B cell (primary cell): ENCODE measurements at regions of chr6 and their contacts with region 1.

Region 1: DNA sequence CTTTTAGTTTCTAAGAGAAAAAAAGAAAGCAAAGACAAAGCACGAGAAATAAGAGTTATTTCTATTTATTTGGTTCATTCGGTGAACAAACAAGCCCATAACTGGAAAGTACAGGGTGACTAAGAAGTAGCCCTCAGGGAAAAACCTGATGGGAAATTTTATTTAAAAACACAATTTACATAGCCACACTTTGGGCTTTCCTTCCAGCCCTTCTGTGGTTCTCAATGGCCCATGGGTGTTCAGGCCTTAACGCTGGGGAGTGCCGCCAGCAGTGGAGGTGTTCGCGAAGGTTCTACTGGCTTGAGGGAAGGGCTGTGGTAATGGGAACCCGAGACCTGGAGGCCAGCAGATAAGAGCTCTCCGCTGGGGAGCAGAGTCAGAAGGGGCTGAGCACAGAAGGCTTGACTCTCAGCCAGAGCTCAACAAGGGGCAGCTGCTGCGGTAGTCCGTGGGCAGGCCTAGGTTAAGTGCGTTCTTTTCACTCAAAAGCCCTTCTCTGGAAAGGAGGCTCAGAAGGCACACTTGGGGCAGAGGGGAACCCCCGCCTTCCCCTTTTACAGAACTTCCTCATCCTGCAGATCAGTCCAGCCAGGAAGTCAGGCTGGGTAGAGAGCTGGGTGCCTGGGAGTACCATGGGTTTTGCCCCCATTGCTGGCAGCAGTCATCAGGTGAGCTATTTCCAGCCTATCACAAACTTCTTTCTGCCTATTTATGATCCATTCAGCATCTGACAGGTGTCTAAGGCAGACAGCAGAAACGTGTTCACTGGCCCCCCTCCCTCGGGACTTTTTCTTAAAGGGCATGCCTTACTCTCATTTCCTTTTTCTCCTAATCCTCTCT is 8.8 kb upstream of the CD83 start:
- DNase-seq: peak; percentile 95
- ATAC-seq: peak; percentile 81
- H3K4me3 ChIP-seq: peak overlapping the region in 3 of 5 experiments; percentile 26 to 55 (median 40)
- H3K4me3 Mint-ChIP-seq: peak overlapping the region; percentile 85
- H3K27ac ChIP-seq: peak overlapping the region; percentile 93 to 99
- H3K27ac Mint-ChIP-seq: peak overlapping the region; percentile 96
- H3K4me1 ChIP-seq: peaks cover 45 to 50% of the 10 kb centered on the region in 2 donors
- H3K4me1 Mint-ChIP-seq: peaks cover 64% of the 10 kb centered on the region
- H3K27me3 ChIP-seq: no peaks in the 10 kb centered on the region
- H3K27me3 Mint-ChIP-seq: no peaks in the 10 kb centered on the region
- CTCF ChIP-seq: no peak

Region 2: DNA sequence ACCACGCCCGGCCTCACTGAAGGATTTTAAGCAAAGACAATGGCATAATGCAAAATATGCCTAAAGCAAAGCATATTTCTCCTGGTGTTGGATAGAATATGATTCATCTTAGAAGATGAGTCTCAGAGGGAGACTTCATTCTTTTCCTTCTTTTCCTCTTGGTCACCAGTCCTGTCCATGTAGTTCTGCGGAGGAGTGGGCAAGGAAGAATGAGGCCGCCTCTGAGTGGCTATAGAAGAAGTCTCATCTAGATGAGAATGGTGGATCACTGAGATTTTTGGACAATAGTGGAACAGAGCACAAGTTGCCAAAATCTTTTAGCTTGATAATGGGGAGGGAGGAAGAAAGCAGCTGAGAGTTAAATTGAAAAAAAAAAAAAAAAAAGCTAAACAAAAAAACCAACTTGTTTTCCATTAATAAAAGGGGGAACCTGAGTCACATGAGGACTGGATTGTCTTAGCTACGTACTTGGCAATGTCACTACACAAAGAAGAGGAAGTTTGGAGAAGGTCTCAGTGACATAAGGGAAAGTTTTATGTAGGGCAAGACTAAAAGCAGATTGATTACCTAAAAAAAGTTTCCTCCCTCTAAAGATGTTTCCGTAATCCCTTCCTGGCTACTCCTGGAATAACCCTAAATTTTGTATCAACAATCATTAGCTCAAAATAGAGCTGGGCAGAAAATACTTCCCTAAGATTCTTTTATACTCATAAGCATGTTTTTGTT is 14.8 kb after region 1 on chr6:
- CTCF ChIA-PET with region 1: interaction called, 11 read pairs
- POLR2A ChIA-PET with region 1: interaction called, 15 read pairs
- intact Hi-C with region 1: no loop called
- DNase-seq: peak; percentile 85
- ATAC-seq: peak; percentile 6
- H3K4me3 ChIP-seq: peak overlapping the region in 2 of 5 experiments; percentile 19 to 35
- H3K4me3 Mint-ChIP-seq: peak overlapping the region; percentile 90
- H3K27ac ChIP-seq: peak overlapping the region; percentile 98 to 99
- H3K27ac Mint-ChIP-seq: peak overlapping the region; percentile 91
- H3K4me1 ChIP-seq: peaks cover 97% of the 10 kb centered on the region in 2 donors
- H3K4me1 Mint-ChIP-seq: peaks cover 76% of the 10 kb centered on the region
- H3K27me3 ChIP-seq: no peaks in the 10 kb centered on the region
- H3K27me3 Mint-ChIP-seq: no peaks in the 10 kb centered on the region
- CTCF ChIP-seq: no peak